Transverse colon (tissue), 4 donors: ENCODE measurements at regions of chr15 and their contacts with region 1.

Region 1: GRCh38 chr15:73370151-73370550 is 1.4 kb upstream of the HCN4 start:
- DNase-seq: no peak
- H3K4me3 ChIP-seq: no peak overlapping the region
- H3K27ac ChIP-seq: no peak overlapping the region
- H3K4me1 ChIP-seq: peaks cover 0 to 20% (median 10%) of the 10 kb centered on the region in 4 donors
- H3K27me3 ChIP-seq: peaks cover 87% of the 10 kb centered on the region
- CTCF ChIP-seq: no peak
- EP300 ChIP-seq: no peak
- POLR2A ChIP-seq: no peak

Region 2: GRCh38 chr15:72764656-72765055 is 605.5 kb before region 1 on chr15:
- in situ Hi-C with region 1: no loop called
- intact Hi-C with region 1: loop called (anchors 5 kb)
- DNase-seq: no peak
- H3K4me3 ChIP-seq: no peak overlapping the region
- H3K27ac ChIP-seq: no peak overlapping the region
- H3K4me1 ChIP-seq: no peaks in the 10 kb centered on the region
- H3K27me3 ChIP-seq: no peaks in the 10 kb centered on the region
- CTCF ChIP-seq: no peak
- EP300 ChIP-seq: no peak
- POLR2A ChIP-seq: no peak

Region 3: GRCh38 chr15:73325193-73325861 is 44.8 kb before region 1 on chr15:
- in situ Hi-C with region 1: no loop called
- intact Hi-C with region 1: no loop called
- DNase-seq: no peak
- H3K4me3 ChIP-seq: no peak overlapping the region
- H3K27ac ChIP-seq: no peak overlapping the region
- H3K4me1 ChIP-seq: no peaks in the 10 kb centered on the region
- H3K27me3 ChIP-seq: peaks cover under 1% of the 10 kb centered on the region
- CTCF ChIP-seq: no peak
- EP300 ChIP-seq: no peak
- POLR2A ChIP-seq: no peak